ENCODE measurements at regions of chr7 and their contacts with region 1.

Region 1: GRCh38 chr7:124171068-124171467 is 138.2 kb upstream of the TMEM229A start:
- DNase-seq: no peak
- H3K4me3 ChIP-seq: no peak overlapping the region
- H3K27ac ChIP-seq: no peak overlapping the region
- H3K4me1 ChIP-seq: no peaks in the 10 kb centered on the region
- H3K27me3 ChIP-seq: no peaks in the 10 kb centered on the region
- CTCF ChIP-seq: 0 out of 2 replicates have a peak, but pooled peaks have one; percentile 33

Region 2: GRCh38 chr7:124246262-124246863 is 75.3 kb after region 1 on chr7:
- CTCF ChIA-PET with region 1: no interaction called
- POLR2A ChIA-PET with region 1: no interaction called
- intact Hi-C with region 1: no loop called
- DNase-seq: no peak
- H3K4me3 ChIP-seq: no peak overlapping the region
- H3K27ac ChIP-seq: no peak overlapping the region
- H3K4me1 ChIP-seq: no peaks in the 10 kb centered on the region
- H3K27me3 ChIP-seq: no peaks in the 10 kb centered on the region
- CTCF ChIP-seq: no peak

Region 3: GRCh38 chr7:124784879-124785818 is 614.1 kb after region 1 on chr7:
- CTCF ChIA-PET with region 1: no interaction called
- POLR2A ChIA-PET with region 1: no interaction called
- intact Hi-C with region 1: loop called (anchors 2 kb)
- DNase-seq: peak in 1 of 2 experiments; percentile 45
- H3K4me3 ChIP-seq: no peak overlapping the region
- H3K27ac ChIP-seq: no peak overlapping the region
- H3K4me1 ChIP-seq: no peaks in the 10 kb centered on the region
- H3K27me3 ChIP-seq: no peaks in the 10 kb centered on the region
- CTCF ChIP-seq: peak; percentile 88

Region 4: DNA sequence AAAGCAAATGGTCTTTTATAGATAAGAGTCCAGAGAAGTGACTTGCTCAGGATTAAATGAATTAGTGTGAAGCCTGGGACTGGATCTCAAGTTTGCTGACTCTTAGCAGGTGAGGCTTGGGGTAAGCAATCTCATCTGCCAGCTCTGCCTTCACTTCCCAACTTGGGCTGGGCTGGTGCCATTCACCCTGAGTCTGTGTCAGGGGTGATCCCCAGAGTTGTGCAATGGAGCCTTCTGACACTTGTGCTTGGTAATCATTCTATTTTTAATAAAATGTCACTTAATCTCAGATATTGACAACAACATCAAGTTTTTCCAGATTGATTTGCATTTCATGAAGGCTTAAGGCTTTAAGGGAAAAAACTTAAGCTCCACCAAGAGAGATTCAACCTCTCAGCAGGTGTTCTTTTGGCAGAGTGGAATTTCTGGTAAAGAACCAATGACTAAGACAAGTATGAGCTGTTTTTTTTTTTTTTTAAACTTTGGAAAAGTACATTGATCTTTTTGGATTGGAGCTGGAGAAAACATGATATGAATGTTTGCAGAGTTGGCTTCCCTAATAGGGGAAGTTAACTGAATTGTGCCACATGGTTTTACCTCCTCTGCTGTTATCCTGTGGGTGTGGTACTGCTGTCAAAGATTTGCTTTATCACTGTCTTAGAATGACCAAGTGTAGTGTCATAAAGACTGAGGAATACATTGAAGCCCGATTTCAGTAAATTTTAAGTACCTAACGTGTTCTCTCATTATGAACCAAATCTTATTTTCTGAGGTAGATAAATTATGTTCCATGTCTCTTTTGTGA is 643.1 kb after region 1 on chr7:
- CTCF ChIA-PET with region 1: interaction called, 11 read pairs
- POLR2A ChIA-PET with region 1: no interaction called
- intact Hi-C with region 1: no loop called
- DNase-seq: no peak
- H3K4me3 ChIP-seq: no peak overlapping the region
- H3K27ac ChIP-seq: no peak overlapping the region
- H3K4me1 ChIP-seq: no peaks in the 10 kb centered on the region
- H3K27me3 ChIP-seq: no peaks in the 10 kb centered on the region
- CTCF ChIP-seq: no peak

Measured in PC-9 (cell line).